ENCODE measurements at regions of chr11 and their contacts with region 1.

Region 1: DNA sequence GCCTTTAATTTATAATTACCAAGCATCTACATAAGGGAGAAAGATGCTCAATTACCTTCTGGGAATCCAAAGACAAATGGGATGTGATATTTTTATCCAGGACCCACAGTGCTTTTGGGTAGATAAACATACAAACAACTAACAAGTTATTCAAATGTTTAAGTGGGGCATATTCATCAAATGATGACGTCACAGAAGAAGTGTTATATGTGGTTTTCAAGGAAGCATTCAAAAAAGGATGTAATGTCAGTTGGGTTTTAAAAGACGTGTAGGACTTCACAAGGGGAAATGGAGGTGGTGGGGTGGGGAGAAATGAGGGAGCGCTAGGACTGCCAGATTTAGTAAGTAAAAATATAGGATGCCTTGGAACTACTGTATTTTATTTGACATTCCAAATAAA is 915.9 kb downstream of the KCNA4 start:
- DNase-seq: no peak
- ATAC-seq: no peak
- H3K4me3 ChIP-seq: no peak overlapping the region
- H3K4me3 Mint-ChIP-seq: no peak overlapping the region
- H3K27ac ChIP-seq: no peak overlapping the region
- H3K27ac Mint-ChIP-seq: no peak overlapping the region
- H3K4me1 ChIP-seq: no peaks in the 10 kb centered on the region
- H3K4me1 Mint-ChIP-seq: no peaks in the 10 kb centered on the region
- H3K27me3 ChIP-seq: no peaks in the 10 kb centered on the region
- H3K27me3 Mint-ChIP-seq: no peaks in the 10 kb centered on the region
- CTCF ChIP-seq: no peak

Region 2: GRCh38 chr11:29040491-29040890 is 60.5 kb before region 1 on chr11:
- CTCF ChIA-PET with region 1: no interaction called
- POLR2A ChIA-PET with region 1: no interaction called
- intact Hi-C with region 1: loop called in 1 of 2 experiments (anchors 10 kb)
- DNase-seq: no peak
- ATAC-seq: no peak
- H3K4me3 ChIP-seq: no peak overlapping the region
- H3K4me3 Mint-ChIP-seq: no peak overlapping the region
- H3K27ac ChIP-seq: no peak overlapping the region
- H3K27ac Mint-ChIP-seq: no peak overlapping the region
- H3K4me1 ChIP-seq: no peaks in the 10 kb centered on the region
- H3K4me1 Mint-ChIP-seq: no peaks in the 10 kb centered on the region
- H3K27me3 ChIP-seq: no peaks in the 10 kb centered on the region
- H3K27me3 Mint-ChIP-seq: no peaks in the 10 kb centered on the region
- CTCF ChIP-seq: no peak

Region 3: DNA sequence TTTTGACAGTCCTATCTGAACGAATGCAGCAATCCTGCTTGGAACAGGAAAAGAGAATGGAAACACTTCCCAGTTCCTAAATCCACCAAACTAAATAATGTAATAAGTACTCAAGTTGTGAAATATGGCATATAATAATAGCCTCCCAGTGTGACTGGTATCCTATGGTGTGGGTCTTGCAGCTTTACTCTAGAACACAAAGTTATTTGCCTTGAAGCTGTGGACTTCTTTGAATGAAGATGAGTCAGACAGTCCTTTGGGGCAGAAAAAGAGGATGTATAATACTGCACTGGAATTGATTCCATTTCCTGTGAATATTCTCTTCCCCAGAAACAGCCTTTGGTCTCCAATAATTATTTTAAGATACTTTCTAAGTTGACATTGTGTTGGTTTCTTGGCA is 28.9 kb after region 1 on chr11:
- CTCF ChIA-PET with region 1: no interaction called
- POLR2A ChIA-PET with region 1: no interaction called
- intact Hi-C with region 1: no loop called
- DNase-seq: no peak
- ATAC-seq: no peak
- H3K4me3 ChIP-seq: no peak overlapping the region
- H3K4me3 Mint-ChIP-seq: no peak overlapping the region
- H3K27ac ChIP-seq: no peak overlapping the region
- H3K27ac Mint-ChIP-seq: no peak overlapping the region
- H3K4me1 ChIP-seq: no peaks in the 10 kb centered on the region
- H3K4me1 Mint-ChIP-seq: no peaks in the 10 kb centered on the region
- H3K27me3 ChIP-seq: no peaks in the 10 kb centered on the region
- H3K27me3 Mint-ChIP-seq: no peaks in the 10 kb centered on the region
- CTCF ChIP-seq: no peak

Measured in CD8-positive, alpha-beta T cell (primary cell).